ENCODE measurements at regions of chr12 and their contacts with region 1.

Region 1: DNA sequence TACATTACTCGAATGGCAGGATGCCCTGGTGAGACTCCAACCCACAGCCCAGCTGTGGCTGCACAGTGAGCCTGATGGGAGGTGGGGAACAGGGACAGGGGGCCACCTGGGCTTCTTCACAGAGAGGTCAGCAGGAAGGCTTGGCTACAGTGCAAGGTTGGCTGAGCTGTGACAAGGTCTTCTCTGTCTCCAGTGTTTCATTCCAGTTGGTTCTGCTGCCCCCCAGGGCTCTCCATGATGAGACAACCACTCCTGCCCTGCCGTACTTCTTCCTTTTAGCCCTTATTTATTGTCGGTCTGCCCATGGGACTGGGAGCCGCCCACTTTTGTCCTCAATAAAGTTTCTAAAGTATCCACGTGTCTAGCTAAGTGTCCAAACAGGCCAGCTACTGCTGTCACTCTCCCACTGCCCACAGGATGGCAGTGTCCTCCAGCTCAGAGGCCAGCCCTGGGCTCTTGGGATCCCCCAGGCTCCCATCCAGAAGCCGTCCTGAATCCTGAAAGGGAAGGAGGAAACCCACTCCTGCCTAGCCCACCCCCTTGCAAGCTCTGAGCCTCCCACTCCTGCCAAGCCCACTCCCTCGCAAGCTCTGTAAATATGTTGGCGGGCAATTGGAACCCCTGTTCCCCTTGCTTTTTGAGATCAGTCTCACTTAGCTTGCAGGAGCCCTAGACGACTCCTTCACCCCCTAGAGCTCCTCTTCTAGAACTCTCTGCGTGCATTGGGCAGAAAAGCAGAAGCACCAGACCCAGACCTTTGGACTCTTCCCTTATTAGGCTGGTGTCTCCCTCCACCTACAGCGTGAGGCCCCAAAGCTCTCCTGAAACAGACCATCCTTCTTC is 5.4 kb downstream of the C1QL4 start:
- DNase-seq: peak; percentile 84 to 86
- H3K4me3 ChIP-seq: no peak overlapping the region
- H3K4me3 Mint-ChIP-seq: peak overlapping the region; percentile 18
- H3K27ac Mint-ChIP-seq: peak overlapping the region; percentile 77
- H3K4me1 ChIP-seq: peaks cover 24% of the 10 kb centered on the region
- H3K4me1 Mint-ChIP-seq: peaks cover 24% of the 10 kb centered on the region
- H3K27me3 ChIP-seq: no peaks in the 10 kb centered on the region
- H3K27me3 Mint-ChIP-seq: no peaks in the 10 kb centered on the region
- CTCF ChIP-seq: peak; percentile 90 to 96

Region 2: DNA sequence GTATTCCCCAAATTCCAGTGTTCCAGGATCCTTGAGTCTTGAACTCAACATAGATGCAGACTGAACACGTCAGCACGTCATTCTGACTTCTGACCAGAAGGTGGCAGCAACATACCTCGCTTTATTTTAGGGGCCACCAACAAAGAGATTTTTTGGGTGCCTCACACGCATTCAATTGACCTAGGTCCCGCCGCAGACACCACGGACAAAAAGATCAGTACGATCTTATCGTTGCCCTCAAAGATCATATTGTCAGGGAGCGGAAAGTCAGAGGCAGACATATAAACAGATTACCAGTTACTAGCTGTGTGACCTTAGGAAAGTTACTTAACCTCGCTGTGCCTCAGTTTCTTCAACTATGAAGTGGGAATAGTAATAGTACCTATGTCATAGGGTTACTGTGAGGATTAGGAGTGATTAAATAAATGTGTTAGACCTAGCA is 43.2 kb before region 1 on chr12:
- CTCF ChIA-PET with region 1: interaction called, 12 read pairs
- POLR2A ChIA-PET with region 1: no interaction called
- intact Hi-C with region 1: no loop called
- DNase-seq: peak in 1 of 2 experiments; percentile 75
- H3K4me3 ChIP-seq: no peak overlapping the region
- H3K4me3 Mint-ChIP-seq: no peak overlapping the region
- H3K27ac Mint-ChIP-seq: no peak overlapping the region
- H3K4me1 ChIP-seq: peaks cover 3% of the 10 kb centered on the region; the same call in 1 of the 2 replicates
- H3K4me1 Mint-ChIP-seq: peaks cover 6% of the 10 kb centered on the region
- H3K27me3 ChIP-seq: no peaks in the 10 kb centered on the region
- H3K27me3 Mint-ChIP-seq: peaks cover 3% of the 10 kb centered on the region
- CTCF ChIP-seq: peak; percentile 77 to 96

Region 3: DNA sequence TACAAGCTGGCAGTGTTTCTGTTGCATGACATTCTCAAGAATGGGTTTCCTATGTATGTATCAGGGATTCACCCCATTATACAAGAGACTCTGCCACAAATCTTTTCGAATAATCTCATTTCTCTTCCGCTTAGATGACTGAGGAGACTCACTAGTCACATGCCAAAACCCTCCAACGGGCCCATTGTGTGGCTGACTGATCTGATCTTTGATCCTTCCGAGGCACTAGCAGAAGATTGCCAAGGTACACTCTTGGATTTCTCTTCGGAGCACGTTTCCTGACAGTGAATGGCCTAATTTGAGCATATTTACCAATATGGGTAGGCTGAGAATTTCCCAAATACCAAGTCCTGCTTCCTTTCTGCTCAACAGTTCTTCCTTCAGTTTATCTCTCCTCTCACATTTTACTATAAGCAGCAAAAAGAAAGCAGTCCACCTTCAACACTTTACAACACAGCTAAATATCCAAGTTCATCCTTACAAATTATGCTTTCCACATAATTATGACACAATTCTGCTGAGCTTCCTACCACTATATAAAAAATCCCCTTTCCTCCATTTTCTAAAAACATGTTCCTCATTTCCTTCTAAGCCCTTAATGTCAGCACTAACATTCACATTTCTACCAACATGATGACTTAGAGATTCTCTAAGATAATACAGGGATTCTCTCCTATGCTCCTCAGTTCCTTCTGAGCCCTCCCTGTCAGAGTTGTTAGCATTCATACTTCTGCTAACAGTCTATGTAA is 25.7 kb before region 1 on chr12:
- CTCF ChIA-PET with region 1: no interaction called
- POLR2A ChIA-PET with region 1: no interaction called
- intact Hi-C with region 1: no loop called
- DNase-seq: no peak
- H3K4me3 ChIP-seq: no peak overlapping the region
- H3K4me3 Mint-ChIP-seq: no peak overlapping the region
- H3K27ac Mint-ChIP-seq: no peak overlapping the region
- H3K4me1 ChIP-seq: 0 out of 2 replicates have a peak, but pooled peaks cover 5% of the 10 kb centered on the region
- H3K4me1 Mint-ChIP-seq: peaks cover 18% of the 10 kb centered on the region
- H3K27me3 ChIP-seq: no peaks in the 10 kb centered on the region
- H3K27me3 Mint-ChIP-seq: peaks cover 10% of the 10 kb centered on the region
- CTCF ChIP-seq: no peak

Region 4: DNA sequence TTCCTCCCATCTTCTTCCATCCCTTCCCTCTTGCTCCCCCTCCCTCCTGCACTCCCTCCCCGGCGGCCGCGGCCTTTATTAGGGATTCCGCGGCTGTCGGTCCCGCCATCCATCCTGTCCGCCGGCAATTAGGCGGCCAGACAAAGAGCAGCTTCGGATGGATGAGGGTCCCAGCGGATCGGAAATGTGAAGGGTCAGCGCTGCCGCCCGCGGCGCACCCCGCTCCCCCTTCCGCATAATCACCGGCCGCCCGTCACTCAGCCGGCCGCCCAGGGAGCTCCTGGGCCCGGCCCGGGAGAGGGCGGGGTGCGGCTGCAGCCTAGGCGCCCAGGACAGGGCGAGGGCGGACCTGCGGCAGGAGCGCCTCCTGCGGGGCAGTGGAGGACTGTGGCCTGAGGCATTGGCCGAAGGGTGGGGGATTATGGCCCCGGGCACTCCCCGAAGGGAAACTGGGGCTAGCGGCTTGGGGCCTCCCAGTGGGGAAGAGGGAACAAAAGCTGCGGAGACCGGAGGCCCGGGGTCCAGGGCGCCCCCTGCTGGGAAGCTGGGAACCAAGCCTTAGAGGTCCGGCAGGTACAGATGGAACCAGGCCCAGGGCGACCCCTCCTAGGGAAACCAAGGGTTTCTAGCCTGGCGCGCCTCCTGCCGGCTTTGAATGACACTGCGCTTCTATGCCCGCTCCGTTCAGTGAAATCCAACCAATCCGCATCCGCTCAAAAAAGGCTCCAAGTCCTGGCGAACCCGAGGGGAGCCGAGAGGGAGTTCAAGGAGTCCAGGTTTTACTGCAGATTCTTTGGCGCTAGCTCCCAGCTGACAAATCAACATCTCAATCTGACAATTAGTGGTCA is 10.7 kb after region 1 on chr12:
- CTCF ChIA-PET with region 1: interaction called, 153 read pairs
- POLR2A ChIA-PET with region 1: interaction called, 30 read pairs
- intact Hi-C with region 1: loop called (anchors 1 kb)
- DNase-seq: peak; percentile 61 to 74
- H3K4me3 ChIP-seq: no peak overlapping the region
- H3K4me3 Mint-ChIP-seq: no peak overlapping the region
- H3K27ac Mint-ChIP-seq: no peak overlapping the region
- H3K4me1 ChIP-seq: peaks cover 4% of the 10 kb centered on the region
- H3K4me1 Mint-ChIP-seq: peaks cover 8% of the 10 kb centered on the region
- H3K27me3 ChIP-seq: no peaks in the 10 kb centered on the region
- H3K27me3 Mint-ChIP-seq: no peaks in the 10 kb centered on the region
- CTCF ChIP-seq: peak; percentile 47 to 67

Region 5: DNA sequence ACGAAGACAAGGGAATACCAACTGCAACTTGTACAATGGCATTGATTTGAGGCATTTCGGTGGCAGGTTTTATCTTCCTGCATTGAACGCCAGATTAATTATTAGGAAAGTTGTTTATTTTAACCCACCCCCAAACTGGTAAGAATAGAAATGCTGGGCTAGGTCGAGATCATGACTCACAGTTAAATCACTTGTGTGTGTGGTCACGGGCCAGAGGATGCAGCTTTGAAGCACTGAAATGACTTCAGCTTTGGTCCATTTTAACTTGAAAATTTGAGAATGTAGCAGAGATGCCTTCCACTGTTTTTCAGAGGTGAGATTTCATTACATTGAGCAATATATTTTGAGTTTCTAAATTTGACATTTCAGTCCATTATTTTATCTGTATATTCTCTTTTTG is 183.7 kb after region 1 on chr12:
- CTCF ChIA-PET with region 1: interaction called, 26 read pairs
- POLR2A ChIA-PET with region 1: no interaction called
- intact Hi-C with region 1: no loop called
- DNase-seq: no peak
- H3K4me3 ChIP-seq: no peak overlapping the region
- H3K4me3 Mint-ChIP-seq: no peak overlapping the region
- H3K27ac Mint-ChIP-seq: no peak overlapping the region
- H3K4me1 ChIP-seq: no peaks in the 10 kb centered on the region
- H3K4me1 Mint-ChIP-seq: no peaks in the 10 kb centered on the region
- H3K27me3 ChIP-seq: no peaks in the 10 kb centered on the region
- H3K27me3 Mint-ChIP-seq: no peaks in the 10 kb centered on the region
- CTCF ChIP-seq: no peak

Region 6: DNA sequence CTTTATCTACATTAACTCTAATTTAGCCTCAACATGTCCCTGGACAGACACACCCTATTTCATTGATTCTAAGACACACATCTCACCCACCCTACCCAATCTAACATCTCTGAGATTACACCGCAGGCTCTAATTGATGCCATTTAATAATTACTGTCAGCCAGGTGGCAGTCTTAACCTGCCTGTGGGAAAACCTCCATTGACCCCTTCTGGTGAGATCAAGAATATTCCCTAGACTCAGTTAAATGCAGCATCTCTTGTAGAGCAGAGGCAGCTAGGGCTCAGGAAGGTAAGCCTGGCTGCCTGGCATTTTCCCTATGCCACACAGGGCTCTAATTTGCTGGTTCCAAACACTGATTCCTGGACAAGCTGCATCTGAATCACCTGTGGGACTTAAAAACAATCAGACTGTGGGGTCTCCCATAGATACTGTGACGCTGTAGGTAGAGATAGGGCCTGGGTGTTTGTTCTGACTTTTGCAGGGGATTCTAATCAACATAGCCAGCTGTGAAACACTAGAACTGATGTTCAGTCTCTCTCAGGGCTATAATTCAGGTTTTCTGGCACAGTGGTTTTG is 222.0 kb after region 1 on chr12:
- CTCF ChIA-PET with region 1: interaction called, 19 read pairs
- POLR2A ChIA-PET with region 1: no interaction called
- intact Hi-C with region 1: no loop called
- DNase-seq: peak in 1 of 2 experiments; percentile 65
- H3K4me3 ChIP-seq: no peak overlapping the region
- H3K4me3 Mint-ChIP-seq: no peak overlapping the region
- H3K27ac Mint-ChIP-seq: no peak overlapping the region
- H3K4me1 ChIP-seq: no peaks in the 10 kb centered on the region
- H3K4me1 Mint-ChIP-seq: no peaks in the 10 kb centered on the region
- H3K27me3 ChIP-seq: no peaks in the 10 kb centered on the region
- H3K27me3 Mint-ChIP-seq: no peaks in the 10 kb centered on the region
- CTCF ChIP-seq: peak; percentile 81 to 93